Adrenal gland (tissue), 19 donors: ENCODE measurements at regions of chr2 and their contacts with region 1.

Region 1: DNA sequence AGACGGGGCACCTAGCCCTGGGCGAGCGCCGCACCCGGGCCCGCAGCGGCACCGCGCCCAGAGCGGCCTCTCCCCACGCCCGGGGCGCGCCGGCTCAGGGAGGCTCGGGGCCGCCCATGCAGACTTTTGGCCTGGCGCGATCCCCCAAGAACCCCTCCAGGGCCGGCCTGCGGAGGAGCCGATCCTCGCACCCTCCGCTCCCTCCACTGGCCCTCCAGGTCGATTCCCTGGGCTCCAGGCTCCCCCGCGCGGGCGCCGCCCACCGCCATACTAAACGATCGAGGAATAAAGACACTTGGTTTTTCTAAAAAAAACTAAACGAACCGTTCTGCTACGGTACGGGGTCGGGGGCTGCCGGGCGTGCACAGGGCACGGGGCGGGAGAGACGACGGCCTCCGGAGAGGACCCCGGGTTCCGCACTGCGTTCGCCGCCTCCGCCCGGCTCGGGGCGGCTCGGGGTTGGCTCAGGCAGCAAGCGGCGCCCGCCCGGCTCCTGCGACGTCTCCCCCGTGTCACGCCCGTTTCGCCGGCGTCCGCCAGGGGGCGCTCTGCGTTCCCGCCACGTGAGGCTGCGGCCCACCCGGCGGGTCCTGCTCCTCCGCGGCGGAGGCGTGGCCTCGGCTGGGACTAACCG is 365 bp upstream of the KHK start:
- DNase-seq: peak; percentile 91 to 97 (median 94)
- H3K4me3 ChIP-seq: peak overlapping the region in 3 of 4 donors; percentile 23 to 62 (median 39)
- H3K27ac ChIP-seq: peak overlapping the region; percentile 57 to 94 (median 92)
- H3K4me1 ChIP-seq: peaks cover 19 to 36% of the 10 kb centered on the region in 2 donors
- H3K27me3 ChIP-seq: no peaks in the 10 kb centered on the region
- CTCF ChIP-seq: peak; percentile 49 to 99 (median 76)
- POLR2A ChIP-seq: peak; percentile 60 to 87

Region 2: GRCh38 chr2:26968001-26968400 is 118.2 kb before region 1 on chr2:
- intact Hi-C with region 1: loop called (anchors 5 to 10 kb)
- DNase-seq: no peak
- H3K4me3 ChIP-seq: no peak overlapping the region
- H3K27ac ChIP-seq: no peak overlapping the region
- H3K4me1 ChIP-seq: peaks cover 3 to 17% of the 10 kb centered on the region in 2 donors
- H3K27me3 ChIP-seq: no peaks in the 10 kb centered on the region
- CTCF ChIP-seq: no peak
- POLR2A ChIP-seq: no peak

Region 3: GRCh38 chr2:27032495-27033252 is 53.5 kb before region 1 on chr2 and contains the start of gene TMEM214:
- intact Hi-C with region 1: loop called (anchors 5 to 10 kb)
- DNase-seq: peak; percentile 88 to 94 (median 90)
- H3K4me3 ChIP-seq: peak within 1 kb of the TSS; percentile 54 to 99 (median 65)
- H3K27ac ChIP-seq: peak within 1 kb of the TSS in 4 of 5 donors; percentile 62 to 87 (median 73)
- H3K4me1 ChIP-seq: peaks cover 10 to 22% of the 10 kb centered on the region in 2 donors
- H3K27me3 ChIP-seq: no peaks in the 10 kb centered on the region
- CTCF ChIP-seq: peak in 3 of 6 experiments; percentile 19 to 42 (median 35)
- POLR2A ChIP-seq: peak; percentile 67 to 70
- total RNA-seq, gene TMEM214: 25.2 to 124 (median 50.0) TPM